HepG2 (cell line): ENCODE measurements at regions of chr2 and their contacts with region 1.

Region 1: GRCh38 chr2:97849881-97850528 is 136.6 kb downstream of the ZAP70 start:
- DNase-seq: no peak
- ATAC-seq: no peak
- H3K4me3 ChIP-seq: no peak overlapping the region
- H3K27ac ChIP-seq: no peak overlapping the region
- H3K4me1 ChIP-seq: 0 out of 2 replicates have a peak, but pooled peaks cover 7% of the 10 kb centered on the region
- H3K27me3 ChIP-seq: no peaks in the 10 kb centered on the region
- CTCF ChIP-seq: no peak
- EP300 ChIP-seq: no peak
- POLR2A ChIP-seq: no peak
- RAD21 ChIP-seq: no peak

Region 2: DNA sequence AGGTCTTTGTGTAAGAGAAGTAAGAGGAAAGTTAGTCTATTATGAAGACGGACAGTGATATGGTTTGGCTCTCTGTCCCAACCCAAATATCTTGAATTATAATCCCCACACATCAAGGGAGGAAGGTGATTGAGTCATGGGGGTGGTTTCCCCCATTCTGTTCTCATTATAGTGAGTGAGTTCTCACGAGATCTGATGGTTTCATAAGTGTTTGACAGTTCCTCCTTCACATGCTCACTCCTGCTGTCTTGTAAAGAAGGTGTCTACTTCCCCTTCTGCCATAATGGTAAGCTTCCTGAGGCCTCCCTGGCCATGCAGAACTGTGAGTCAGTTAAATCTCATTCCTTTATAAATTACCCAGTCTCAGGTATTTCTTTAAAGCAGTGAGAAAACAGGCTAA is 1412.5 kb before region 1 on chr2:
- CTCF ChIA-PET with region 1: no interaction called
- POLR2A ChIA-PET with region 1: no interaction called
- in situ Hi-C with region 1: no loop called
- intact Hi-C with region 1: no loop called
- DNase-seq: no peak
- ATAC-seq: no peak
- H3K4me3 ChIP-seq: no peak overlapping the region
- H3K27ac ChIP-seq: no peak overlapping the region
- H3K4me1 ChIP-seq: no peaks in the 10 kb centered on the region
- H3K27me3 ChIP-seq: no peaks in the 10 kb centered on the region
- CTCF ChIP-seq: no peak
- EP300 ChIP-seq: no peak
- POLR2A ChIP-seq: no peak
- RAD21 ChIP-seq: no peak

Region 3: GRCh38 chr2:97645695-97646629 is 204.0 kb before region 1 on chr2 and contains the start of gene COX5B:
- CTCF ChIA-PET with region 1: no interaction called
- POLR2A ChIA-PET with region 1: no interaction called
- in situ Hi-C with region 1: no loop called
- intact Hi-C with region 1: no loop called
- DNase-seq: peak; percentile 98
- ATAC-seq: peak; percentile 96
- H3K4me3 ChIP-seq: peak within 1 kb of the TSS; percentile 98 to 100 (median 99)
- H3K27ac ChIP-seq: peak within 1 kb of the TSS; percentile 76
- H3K4me1 ChIP-seq: peaks cover 21% of the 10 kb centered on the region
- H3K27me3 ChIP-seq: no peaks in the 10 kb centered on the region; a peak in 1 of 5 replicates
- CTCF ChIP-seq: peak; percentile 29; the same call in 1 of the 2 replicates
- EP300 ChIP-seq: no peak; a peak in 1 of 4 replicates
- POLR2A ChIP-seq: peak; percentile 92 to 95
- RAD21 ChIP-seq: no peak; the same call in 1 of the 2 replicates
- total RNA-seq, gene COX5B: 453 and 457 TPM in 2 replicates

Region 4: GRCh38 chr2:97728091-97728731 is 121.8 kb before region 1 on chr2:
- CTCF ChIA-PET with region 1: no interaction called
- POLR2A ChIA-PET with region 1: no interaction called
- in situ Hi-C with region 1: no loop called
- intact Hi-C with region 1: no loop called
- DNase-seq: no peak
- ATAC-seq: no peak
- H3K4me3 ChIP-seq: no peak overlapping the region
- H3K27ac ChIP-seq: no peak overlapping the region
- H3K4me1 ChIP-seq: no peaks in the 10 kb centered on the region
- H3K27me3 ChIP-seq: peaks cover 0 to 6% of the 10 kb centered on the region in 2 experiments; a peak in 2 of 5 replicates
- CTCF ChIP-seq: no peak
- EP300 ChIP-seq: no peak
- POLR2A ChIP-seq: no peak
- RAD21 ChIP-seq: no peak

Region 5: GRCh38 chr2:97878865-97879264 is 28.9 kb after region 1 on chr2:
- CTCF ChIA-PET with region 1: no interaction called
- POLR2A ChIA-PET with region 1: no interaction called
- in situ Hi-C with region 1: no loop called
- intact Hi-C with region 1: loop called (anchors 1 kb)
- DNase-seq: no peak
- ATAC-seq: no peak
- H3K4me3 ChIP-seq: no peak overlapping the region
- H3K27ac ChIP-seq: no peak overlapping the region
- H3K4me1 ChIP-seq: peaks cover 18% of the 10 kb centered on the region
- H3K27me3 ChIP-seq: no peaks in the 10 kb centered on the region
- CTCF ChIP-seq: no peak
- EP300 ChIP-seq: no peak
- POLR2A ChIP-seq: no peak
- RAD21 ChIP-seq: no peak